ENCODE measurements at regions of chr2 and their contacts with region 1.

Region 1: DNA sequence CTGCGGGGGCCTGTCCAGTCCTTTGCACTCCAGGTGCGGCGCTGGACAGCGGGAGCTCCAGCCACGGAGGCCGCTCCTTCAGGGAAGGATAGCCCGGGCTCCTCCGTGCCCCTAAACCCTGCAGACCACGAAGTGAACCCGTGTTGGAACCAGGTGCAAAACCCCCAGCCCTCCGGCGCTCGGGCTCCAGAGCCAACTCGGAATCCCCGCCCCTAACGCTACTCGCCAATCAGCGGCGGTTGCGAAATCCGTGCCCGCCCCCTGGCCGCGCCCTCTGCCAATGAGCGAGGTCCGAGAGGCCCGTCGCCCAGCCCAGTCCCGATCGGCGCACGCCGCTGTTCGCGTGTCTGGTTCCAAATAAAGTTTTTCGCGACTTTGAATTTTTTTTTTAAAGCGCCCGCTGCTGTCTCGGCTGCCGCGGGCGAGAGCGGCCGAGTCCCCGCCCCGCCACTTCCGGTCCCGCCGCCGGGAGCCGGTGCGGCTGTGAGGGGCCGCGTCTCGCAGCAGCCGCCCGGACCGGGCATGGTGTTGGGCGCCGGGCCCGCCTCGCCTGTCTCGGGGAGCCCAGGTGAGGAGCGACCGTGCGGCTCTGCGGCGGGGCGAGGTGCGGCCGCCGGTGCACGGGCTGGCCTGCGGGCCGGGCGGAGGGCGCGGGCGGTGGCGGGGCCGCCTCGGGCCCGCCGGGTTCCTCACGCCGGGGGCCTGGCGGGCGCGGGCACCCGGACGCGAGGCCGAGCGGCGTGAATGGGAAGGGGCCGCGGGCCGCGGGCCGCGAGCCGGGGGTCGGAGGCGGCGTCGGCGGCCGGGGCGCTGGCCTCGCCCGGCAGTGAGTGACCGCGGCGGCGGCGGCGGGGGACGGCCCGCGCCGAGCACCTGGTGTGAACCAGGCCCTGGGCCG is at the start of gene UBE2F:
- DNase-seq: peak; percentile 95 to 96
- ATAC-seq: peak; percentile 96 to 97
- H3K4me3 ChIP-seq: peak within 1 kb of the TSS; percentile 80 to 90 (median 88)
- H3K27ac ChIP-seq: peak within 1 kb of the TSS; percentile 75 to 88 (median 84)
- H3K4me1 ChIP-seq: peaks cover 21 to 42% of the 10 kb centered on the region in 2 donors
- H3K27me3 ChIP-seq: no peaks in the 10 kb centered on the region
- CTCF ChIP-seq: no peak
- POLR2A ChIP-seq: peak; percentile 90 to 92
- total RNA-seq, gene UBE2F: 67.3 to 97.3 (median 81.2) TPM

Region 2: DNA sequence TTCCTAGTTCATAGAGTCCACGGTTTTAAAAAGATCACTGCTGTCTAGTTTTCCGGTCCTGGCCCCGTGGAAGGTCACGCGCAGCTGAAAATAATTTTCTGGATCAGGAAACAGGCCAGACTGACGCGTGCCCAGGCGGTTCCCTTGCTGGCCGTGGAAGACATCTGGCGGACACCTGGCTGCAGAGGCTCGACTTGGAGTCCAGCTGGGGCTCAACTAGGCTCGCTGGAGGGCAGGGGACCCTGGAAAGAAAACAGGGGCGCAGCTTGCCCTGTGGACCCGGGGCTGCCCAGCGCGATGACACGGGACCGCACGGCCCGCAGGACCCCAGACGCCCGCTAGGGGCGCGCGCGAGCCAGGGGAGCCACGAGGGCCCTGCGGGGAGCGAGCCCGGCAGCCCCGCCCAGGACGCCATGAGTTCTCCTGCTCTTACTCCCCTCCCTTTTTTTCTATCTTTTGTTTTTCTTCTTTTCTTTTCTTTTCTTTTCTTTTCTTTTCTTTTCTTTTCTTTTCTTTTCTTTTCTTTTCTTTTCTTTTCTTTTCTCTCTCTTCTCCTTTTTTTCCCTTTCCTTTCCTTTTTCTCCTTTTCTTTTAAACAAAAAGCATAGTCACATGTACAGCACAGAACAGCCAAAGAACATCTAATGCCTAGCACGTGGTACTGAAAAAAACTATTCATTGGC is 43.2 kb before region 1 on chr2:
- in situ Hi-C with region 1: no loop called
- intact Hi-C with region 1: loop called (anchors 2 kb)
- DNase-seq: peak; percentile 44 to 71
- ATAC-seq: peak; percentile 83 to 94
- H3K4me3 ChIP-seq: peak overlapping the region; percentile 27 to 54 (median 42)
- H3K27ac ChIP-seq: peak overlapping the region; percentile 36 to 67 (median 62)
- H3K4me1 ChIP-seq: peaks cover 4 to 16% of the 10 kb centered on the region in 2 donors
- H3K27me3 ChIP-seq: no peaks in the 10 kb centered on the region
- CTCF ChIP-seq: peak; percentile 94 to 99 (median 99)
- POLR2A ChIP-seq: no peak

Region 3: GRCh38 chr2:238120463-238121298 is 153.9 kb after region 1 on chr2:
- in situ Hi-C with region 1: no loop called
- intact Hi-C with region 1: no loop called
- DNase-seq: no peak
- ATAC-seq: no peak
- H3K4me3 ChIP-seq: no peak overlapping the region
- H3K27ac ChIP-seq: no peak overlapping the region
- H3K4me1 ChIP-seq: no peaks in the 10 kb centered on the region
- H3K27me3 ChIP-seq: peaks cover 0 to 3% (median 0%) of the 10 kb centered on the region in 3 donors
- CTCF ChIP-seq: peak in 1 of 5 experiments; percentile 32
- POLR2A ChIP-seq: no peak

Region 4: GRCh38 chr2:238263204-238264071 is 296.6 kb after region 1 on chr2:
- in situ Hi-C with region 1: loop called in 1 of 4 experiments (anchors 25 kb)
- intact Hi-C with region 1: no loop called
- DNase-seq: peak; percentile 86 to 93
- ATAC-seq: peak; percentile 93
- H3K4me3 ChIP-seq: no peak overlapping the region
- H3K27ac ChIP-seq: peak overlapping the region; percentile 55 to 70 (median 58)
- H3K4me1 ChIP-seq: peaks cover 16 to 18% of the 10 kb centered on the region in 2 donors
- H3K27me3 ChIP-seq: no peaks in the 10 kb centered on the region
- CTCF ChIP-seq: peak; percentile 76 to 88 (median 86)
- POLR2A ChIP-seq: no peak

Measured in gastrocnemius medialis (tissue), 4 donors.